ENCODE measurements at regions of chr17 and their contacts with region 1.

Region 1: DNA sequence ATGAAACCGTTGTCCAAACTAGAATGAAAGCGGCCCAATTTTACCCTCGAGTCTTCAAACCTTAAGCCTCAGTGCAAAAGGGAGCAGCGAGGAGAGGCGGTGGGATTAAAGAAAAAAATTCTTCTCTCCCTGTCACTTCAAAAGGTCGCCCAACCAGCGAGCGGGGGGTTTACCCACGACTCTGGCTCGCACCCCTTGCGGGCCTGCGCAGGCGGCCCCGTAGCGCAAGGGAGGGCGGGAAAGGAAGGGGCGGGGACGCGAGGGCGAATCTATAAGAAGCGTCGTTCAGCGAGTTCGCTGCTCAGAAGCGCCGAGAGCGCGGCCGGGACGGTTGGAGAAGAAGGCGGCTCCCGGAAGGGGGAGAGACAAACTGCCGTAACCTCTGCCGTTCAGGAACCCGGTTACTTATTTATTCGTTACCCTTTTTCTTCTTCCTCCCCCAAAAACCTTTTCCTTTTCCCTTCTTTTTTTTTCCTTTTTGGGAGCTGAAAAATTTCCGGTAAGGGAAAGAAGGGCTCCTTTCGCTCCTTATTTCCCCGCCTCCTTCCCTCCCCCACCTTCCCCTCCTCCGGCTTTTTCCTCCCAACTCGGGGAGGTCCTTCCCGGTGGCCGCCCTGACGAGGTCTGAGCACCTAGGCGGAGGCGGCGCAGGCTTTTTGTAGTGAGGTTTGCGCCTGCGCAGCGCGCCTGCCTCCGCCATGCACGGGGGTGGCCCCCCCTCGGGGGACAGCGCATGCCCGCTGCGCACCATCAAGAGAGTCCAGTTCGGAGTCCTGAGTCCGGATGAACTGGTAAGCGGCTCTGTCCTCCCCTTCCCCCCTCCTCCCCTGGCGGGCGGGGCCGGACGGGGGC is at the start of gene POLR2A:
- DNase-seq: peak; percentile 96 to 99
- ATAC-seq: peak; percentile 71 to 76
- H3K4me3 ChIP-seq: peak within 1 kb of the TSS; percentile 82 to 90 (median 86)
- H3K27ac ChIP-seq: peak within 1 kb of the TSS; percentile 100
- H3K4me1 ChIP-seq: peaks cover 49 to 70% of the 10 kb centered on the region in 2 donors
- H3K27me3 ChIP-seq: no peaks in the 10 kb centered on the region
- CTCF ChIP-seq: no peak
- POLR2A ChIP-seq: peak; percentile 100
- total RNA-seq, gene POLR2A: 20.3 to 56.9 (median 39.3) TPM

Region 2: GRCh38 chr17:7021993-7022778 is 462.1 kb before region 1 on chr17:
- in situ Hi-C with region 1: no loop called
- intact Hi-C with region 1: loop called (anchors 10 kb)
- DNase-seq: peak; percentile 40 to 71
- ATAC-seq: peak; percentile 57
- H3K4me3 ChIP-seq: peak overlapping the region; percentile 30 to 49 (median 46)
- H3K27ac ChIP-seq: peak overlapping the region; percentile 93 to 99 (median 96)
- H3K4me1 ChIP-seq: peaks cover 28 to 38% of the 10 kb centered on the region in 2 donors
- H3K27me3 ChIP-seq: peaks cover 14 to 16% (median 15%) of the 10 kb centered on the region in 3 donors
- CTCF ChIP-seq: peak; percentile 92 to 98 (median 96)
- POLR2A ChIP-seq: peak; percentile 8 to 31

Region 3: GRCh38 chr17:7351665-7352501 is 132.4 kb before region 1 on chr17 and contains the start of gene KCTD11:
- in situ Hi-C with region 1: no loop called
- intact Hi-C with region 1: loop called (anchors 1 kb)
- DNase-seq: peak; percentile 84 to 91
- ATAC-seq: peak; percentile 70 to 81
- H3K4me3 ChIP-seq: peak within 1 kb of the TSS; percentile 71 to 100 (median 84)
- H3K27ac ChIP-seq: peak within 1 kb of the TSS; percentile 93 to 98 (median 96)
- H3K4me1 ChIP-seq: peaks cover 22 to 40% of the 10 kb centered on the region in 2 donors
- H3K27me3 ChIP-seq: no peaks in the 10 kb centered on the region
- CTCF ChIP-seq: peak in 3 of 5 experiments; percentile 58 to 74 (median 60)
- POLR2A ChIP-seq: peak; percentile 72 to 75
- total RNA-seq, gene KCTD11: 3.6 to 7.0 (median 4.6) TPM

Region 4: GRCh38 chr17:7380321-7380720 is 104.0 kb before region 1 on chr17:
- in situ Hi-C with region 1: no loop called
- intact Hi-C with region 1: no loop called
- DNase-seq: no peak
- ATAC-seq: peak in 1 of 2 donors; percentile 57
- H3K4me3 ChIP-seq: peak overlapping the region; percentile 46 to 57 (median 54)
- H3K27ac ChIP-seq: peak overlapping the region in 3 of 4 donors; percentile 18 to 42 (median 23)
- H3K4me1 ChIP-seq: peaks cover 18 to 25% of the 10 kb centered on the region in 2 donors
- H3K27me3 ChIP-seq: peaks cover 17 to 29% (median 24%) of the 10 kb centered on the region in 3 donors
- CTCF ChIP-seq: no peak
- POLR2A ChIP-seq: no peak

Region 5: DNA sequence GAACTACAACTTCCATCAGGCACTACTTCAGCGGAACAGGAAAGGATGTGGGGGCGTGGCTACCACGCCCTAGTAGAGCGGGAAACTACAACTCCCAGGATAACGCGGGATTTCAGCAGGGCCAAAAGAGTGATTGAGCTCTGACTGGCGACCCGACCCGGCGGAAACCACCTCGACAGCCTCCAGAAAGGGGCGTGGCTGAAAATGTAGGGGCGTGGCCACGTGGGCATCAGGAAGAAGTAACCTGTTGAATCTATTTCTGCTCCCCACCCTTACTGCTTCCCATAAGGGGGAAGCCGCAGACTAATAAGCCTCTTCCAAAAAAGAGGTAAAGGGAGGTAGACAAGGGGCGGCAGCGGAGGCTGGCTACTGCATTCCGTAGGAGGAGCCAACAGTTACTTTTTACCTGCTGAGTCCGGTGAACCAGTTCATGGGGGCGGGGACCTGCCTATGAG is 49.0 kb before region 1 on chr17 and contains the start of gene TMEM102:
- in situ Hi-C with region 1: loop called in 2 of 4 experiments (anchors 5 kb)
- intact Hi-C with region 1: loop called (anchors 1 kb)
- DNase-seq: peak; percentile 95 to 97
- ATAC-seq: peak; percentile 84 to 88
- H3K4me3 ChIP-seq: peak within 1 kb of the TSS; percentile 53 to 63 (median 58)
- H3K27ac ChIP-seq: peak within 1 kb of the TSS; percentile 80 to 100 (median 94)
- H3K4me1 ChIP-seq: peaks cover 29 to 45% of the 10 kb centered on the region in 2 donors
- H3K27me3 ChIP-seq: peaks cover 0 to 4% (median 0%) of the 10 kb centered on the region in 3 donors
- CTCF ChIP-seq: no peak
- POLR2A ChIP-seq: peak; percentile 11 to 14
- total RNA-seq, gene TMEM102: 0.92 to 3.9 (median 2.3) TPM

Region 6: GRCh38 chr17:7614422-7615264 is 130.3 kb after region 1 on chr17 and contains the start of gene FXR2:
- in situ Hi-C with region 1: no loop called
- intact Hi-C with region 1: loop called (anchors 1 kb)
- DNase-seq: peak; percentile 100
- ATAC-seq: peak; percentile 93 to 94
- H3K4me3 ChIP-seq: peak within 1 kb of the TSS; percentile 71 to 95 (median 74)
- H3K27ac ChIP-seq: peak within 1 kb of the TSS; percentile 88 to 98 (median 91)
- H3K4me1 ChIP-seq: peaks cover 37 to 38% of the 10 kb centered on the region in 2 donors
- H3K27me3 ChIP-seq: no peaks in the 10 kb centered on the region
- CTCF ChIP-seq: peak; percentile 41 to 81 (median 65)
- POLR2A ChIP-seq: peak; percentile 97 to 99
- total RNA-seq, gene FXR2: 100 to 174 (median 140) TPM